CD4-positive, alpha-beta memory T cell (primary cell): ENCODE measurements at regions of chr15 and their contacts with region 1.

Region 1: GRCh38 chr15:66497502-66498455 is at the start of gene SNAPC5:
- DNase-seq: peak; percentile 96 to 97 (median 96)
- H3K4me3 ChIP-seq: peak within 1 kb of the TSS; percentile 86 to 90
- H3K4me3 Mint-ChIP-seq: peak within 1 kb of the TSS; percentile 95 to 98 (median 97)
- H3K27ac ChIP-seq: peak within 1 kb of the TSS; percentile 89
- H3K27ac Mint-ChIP-seq: peak within 1 kb of the TSS; percentile 96 to 99 (median 99)
- H3K4me1 ChIP-seq: peaks cover 50% of the 10 kb centered on the region
- H3K4me1 Mint-ChIP-seq: peaks cover 30 to 75% (median 50%) of the 10 kb centered on the region in 4 donors
- H3K27me3 ChIP-seq: no peaks in the 10 kb centered on the region
- H3K27me3 Mint-ChIP-seq: no peaks in the 10 kb centered on the region
- total RNA-seq, gene SNAPC5: 32.5 to 36.6 TPM

Region 2: DNA sequence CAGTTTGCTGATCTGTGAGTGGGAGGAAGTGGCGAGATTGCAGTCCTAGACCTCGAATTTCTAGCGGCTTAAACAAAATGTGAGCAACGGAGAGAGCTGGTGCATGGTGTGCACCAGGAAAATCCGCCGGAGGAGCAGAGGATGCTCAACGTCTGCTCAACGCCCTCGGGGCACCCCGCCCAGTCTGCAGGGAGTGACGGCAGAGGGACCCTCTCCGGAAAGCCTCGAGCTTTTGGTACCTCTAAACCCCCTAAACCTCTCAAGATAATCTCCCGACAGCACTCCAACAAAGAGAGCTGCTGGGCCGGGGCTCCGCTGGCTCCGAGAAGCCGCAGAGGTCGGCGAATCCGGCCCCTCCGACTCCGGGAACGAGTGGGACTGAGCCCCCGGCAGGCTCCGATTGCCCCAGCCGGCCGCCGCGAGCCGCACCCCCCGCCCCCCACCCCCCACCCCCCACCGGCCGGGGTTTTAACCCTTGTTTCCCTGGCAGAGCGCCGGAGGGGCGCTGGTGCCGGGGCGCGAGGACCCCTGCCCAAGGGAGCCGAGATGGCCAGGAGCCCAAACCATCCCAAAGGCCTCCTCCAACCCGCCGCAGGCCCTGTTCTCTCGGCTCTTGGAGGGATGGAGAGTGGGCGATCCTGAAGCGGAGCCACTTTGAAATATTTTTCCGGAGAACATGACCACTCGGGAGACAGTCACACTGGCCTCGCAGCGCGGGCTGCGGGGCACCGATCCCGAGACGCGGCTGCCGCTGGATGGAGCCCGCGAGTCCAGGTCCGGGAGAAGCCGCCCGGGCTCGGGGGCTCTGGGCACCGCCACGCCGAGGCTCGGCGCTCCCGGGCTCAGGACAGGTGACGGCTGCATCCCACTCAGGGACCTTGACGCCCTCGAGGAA is 245.7 kb before region 1 on chr15:
- CTCF ChIA-PET with region 1: interaction called, 15 read pairs
- POLR2A ChIA-PET with region 1: no interaction called
- intact Hi-C with region 1: loop called (anchors 5 kb)
- DNase-seq: peak in 4 of 5 donors; percentile 21 to 40 (median 29)
- H3K4me3 ChIP-seq: peak overlapping the region; percentile 47 to 52
- H3K4me3 Mint-ChIP-seq: peak overlapping the region; percentile 74 to 86 (median 80)
- H3K27ac ChIP-seq: no peak overlapping the region
- H3K27ac Mint-ChIP-seq: peak overlapping the region in 1 of 7 donors; percentile 11
- H3K4me1 ChIP-seq: peaks cover 23% of the 10 kb centered on the region
- H3K4me1 Mint-ChIP-seq: peaks cover 4 to 34% (median 13%) of the 10 kb centered on the region in 4 donors
- H3K27me3 ChIP-seq: peaks cover 48% of the 10 kb centered on the region
- H3K27me3 Mint-ChIP-seq: peaks cover 43 to 45% of the 10 kb centered on the region in 2 donors

Region 3: GRCh38 chr15:66293419-66294156 is 204.2 kb before region 1 on chr15 and contains the start of gene DIS3L:
- CTCF ChIA-PET with region 1: interaction called, 7 read pairs
- POLR2A ChIA-PET with region 1: interaction called, 30 read pairs
- intact Hi-C with region 1: loop called (anchors 1 kb)
- DNase-seq: peak; percentile 65 to 78 (median 72)
- H3K4me3 ChIP-seq: peak within 1 kb of the TSS; percentile 57 to 91
- H3K4me3 Mint-ChIP-seq: peak within 1 kb of the TSS; percentile 85 to 93 (median 90)
- H3K27ac ChIP-seq: peak within 1 kb of the TSS; percentile 91
- H3K27ac Mint-ChIP-seq: peak within 1 kb of the TSS; percentile 93 to 96 (median 95)
- H3K4me1 ChIP-seq: peaks cover 50% of the 10 kb centered on the region
- H3K4me1 Mint-ChIP-seq: peaks cover 26 to 50% (median 41%) of the 10 kb centered on the region in 4 donors
- H3K27me3 ChIP-seq: no peaks in the 10 kb centered on the region
- H3K27me3 Mint-ChIP-seq: no peaks in the 10 kb centered on the region
- total RNA-seq, gene DIS3L: 36.8 to 40.3 TPM

Region 4: GRCh38 chr15:66356345-66357236 is 141.2 kb before region 1 on chr15 and contains the start of gene TIPIN:
- CTCF ChIA-PET with region 1: interaction called, 33 read pairs
- POLR2A ChIA-PET with region 1: interaction called, 30 read pairs
- intact Hi-C with region 1: loop called (anchors 1 kb)
- DNase-seq: peak; percentile 95 to 97 (median 96)
- H3K4me3 ChIP-seq: peak within 1 kb of the TSS; percentile 79 to 80
- H3K4me3 Mint-ChIP-seq: peak within 1 kb of the TSS; percentile 91 to 99 (median 98)
- H3K27ac ChIP-seq: peak within 1 kb of the TSS; percentile 66
- H3K27ac Mint-ChIP-seq: peak within 1 kb of the TSS; percentile 90 to 98 (median 97)
- H3K4me1 ChIP-seq: peaks cover 15% of the 10 kb centered on the region
- H3K4me1 Mint-ChIP-seq: peaks cover 15 to 23% (median 19%) of the 10 kb centered on the region in 4 donors
- H3K27me3 ChIP-seq: no peaks in the 10 kb centered on the region
- H3K27me3 Mint-ChIP-seq: no peaks in the 10 kb centered on the region
- total RNA-seq, gene TIPIN: 5.9 to 9.0 TPM

Region 5: DNA sequence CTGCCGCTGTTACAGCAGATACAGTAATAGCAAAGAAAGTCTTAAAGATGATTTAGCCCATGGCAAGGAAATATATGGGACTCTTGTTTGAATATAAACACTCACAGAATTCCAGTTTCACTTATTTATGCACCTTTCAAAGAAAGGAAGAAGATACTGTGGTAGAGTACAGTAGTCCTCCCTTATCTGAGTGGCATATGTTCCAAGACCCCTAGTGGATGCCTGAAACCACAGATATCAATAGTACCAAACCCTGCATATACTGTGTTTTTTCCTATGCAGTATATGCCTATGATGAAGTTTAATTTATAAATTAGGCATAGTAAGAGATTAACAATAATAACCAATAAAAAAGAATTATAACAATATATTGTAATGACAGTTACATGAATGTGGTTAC is 102.9 kb before region 1 on chr15:
- CTCF ChIA-PET with region 1: interaction called, 119 read pairs
- POLR2A ChIA-PET with region 1: interaction called, 119 read pairs
- intact Hi-C with region 1: no loop called
- DNase-seq: no peak
- H3K4me3 ChIP-seq: no peak overlapping the region
- H3K4me3 Mint-ChIP-seq: peak overlapping the region in 5 of 8 donors; percentile 16 to 69 (median 55)
- H3K27ac ChIP-seq: no peak overlapping the region
- H3K27ac Mint-ChIP-seq: peak overlapping the region; percentile 52 to 96 (median 70)
- H3K4me1 ChIP-seq: peaks cover 72% of the 10 kb centered on the region
- H3K4me1 Mint-ChIP-seq: peaks cover 52 to 86% (median 66%) of the 10 kb centered on the region in 4 donors
- H3K27me3 ChIP-seq: no peaks in the 10 kb centered on the region
- H3K27me3 Mint-ChIP-seq: no peaks in the 10 kb centered on the region

Region 6: DNA sequence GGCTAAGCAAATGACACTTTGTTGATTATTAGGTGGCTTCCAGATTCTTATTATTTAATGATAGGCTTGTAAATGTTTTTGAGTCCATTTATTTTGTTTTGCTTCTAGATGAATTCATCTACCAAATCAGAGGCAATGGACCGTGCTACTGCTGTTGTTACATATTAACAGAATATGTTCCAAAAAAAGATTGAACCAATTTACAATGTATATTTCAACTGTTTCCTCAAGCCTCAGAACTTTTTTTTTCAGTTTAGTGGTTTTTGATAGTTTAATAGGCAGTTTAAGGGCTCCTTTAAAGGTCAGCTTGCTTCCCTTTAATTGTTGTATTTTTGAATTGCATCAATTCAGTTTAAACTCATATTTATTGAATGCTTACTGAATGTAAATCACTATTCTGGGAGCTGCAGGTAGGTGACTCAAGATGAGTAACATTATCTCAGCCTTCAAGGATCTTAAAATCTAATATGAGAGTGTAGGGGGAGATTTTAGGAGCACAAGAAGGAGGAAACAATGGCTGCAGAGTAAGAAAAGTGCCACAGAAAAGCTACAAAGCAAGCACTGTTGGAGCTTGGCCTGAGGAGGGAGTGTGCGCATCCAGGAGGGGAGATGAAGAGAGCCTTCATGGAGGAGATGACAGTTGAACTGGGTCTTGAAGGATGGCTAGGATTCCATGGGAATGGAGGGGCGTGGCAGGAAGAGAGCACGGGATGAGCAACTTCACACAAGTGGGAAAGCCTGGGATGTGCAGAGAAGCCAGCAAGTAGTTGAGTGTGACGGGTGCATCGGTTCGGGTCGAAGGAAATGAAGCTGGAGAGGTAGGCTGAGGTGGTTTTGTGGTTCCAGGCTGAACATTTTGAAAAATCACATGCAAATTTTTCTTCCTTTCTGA is 96.4 kb before region 1 on chr15:
- CTCF ChIA-PET with region 1: interaction called, 17 read pairs
- POLR2A ChIA-PET with region 1: interaction called, 6 read pairs
- intact Hi-C with region 1: no loop called
- DNase-seq: peak in 1 of 5 donors; percentile 26
- H3K4me3 ChIP-seq: peak overlapping the region in 1 of 2 donors; percentile 33
- H3K4me3 Mint-ChIP-seq: peak overlapping the region; percentile 54 to 89 (median 81)
- H3K27ac ChIP-seq: peak overlapping the region; percentile 14
- H3K27ac Mint-ChIP-seq: peak overlapping the region; percentile 49 to 94 (median 83)
- H3K4me1 ChIP-seq: peaks cover 69% of the 10 kb centered on the region
- H3K4me1 Mint-ChIP-seq: peaks cover 48 to 83% (median 66%) of the 10 kb centered on the region in 4 donors
- H3K27me3 ChIP-seq: no peaks in the 10 kb centered on the region
- H3K27me3 Mint-ChIP-seq: no peaks in the 10 kb centered on the region

Region 7: DNA sequence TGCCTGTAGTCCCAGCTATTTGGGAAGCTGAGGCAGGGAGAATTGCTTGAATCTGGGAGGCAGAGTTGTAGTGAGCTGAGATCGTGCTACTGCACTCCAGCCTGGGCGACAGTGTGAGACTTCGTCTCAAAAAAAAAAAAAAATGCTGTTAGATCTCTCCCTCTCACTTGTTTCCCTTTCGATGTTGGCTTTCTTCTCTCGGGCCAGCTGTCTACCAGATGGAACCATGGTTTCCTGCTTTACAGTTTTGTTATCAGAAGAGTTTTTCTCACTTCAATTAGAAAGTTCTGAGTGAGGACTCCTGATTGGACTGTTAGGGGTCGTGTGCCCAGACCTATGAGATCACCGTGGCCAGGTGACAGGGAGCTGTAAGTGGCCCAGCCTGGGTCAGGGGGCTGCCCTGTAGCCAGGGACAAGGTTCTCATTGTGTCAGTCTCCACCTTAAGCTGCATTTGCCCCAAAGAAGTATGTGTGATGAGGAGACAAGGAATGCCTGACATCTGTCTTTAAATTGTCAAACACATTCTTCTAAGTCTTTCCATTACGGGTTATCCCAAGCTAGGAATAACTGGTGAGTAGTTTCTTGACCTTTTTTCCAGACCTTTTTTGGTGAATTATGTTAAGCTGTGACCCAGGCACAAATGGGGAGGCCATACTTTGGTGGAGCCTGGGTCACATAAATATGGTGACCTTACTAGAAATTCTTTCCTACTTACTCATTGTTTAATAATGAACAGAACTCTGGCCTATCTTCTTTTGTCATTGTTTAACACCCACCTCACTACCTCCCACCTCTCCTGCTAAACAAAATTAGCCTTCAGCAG is 25.4 kb before region 1 on chr15:
- CTCF ChIA-PET with region 1: interaction called, 42 read pairs
- POLR2A ChIA-PET with region 1: interaction called, 9 read pairs
- intact Hi-C with region 1: loop called (anchors 1 kb)
- DNase-seq: peak; percentile 64 to 79 (median 70)
- H3K4me3 ChIP-seq: no peak overlapping the region
- H3K4me3 Mint-ChIP-seq: peak overlapping the region; percentile 44 to 86 (median 76)
- H3K27ac ChIP-seq: peak overlapping the region; percentile 45
- H3K27ac Mint-ChIP-seq: peak overlapping the region; percentile 83 to 97 (median 90)
- H3K4me1 ChIP-seq: peaks cover 32% of the 10 kb centered on the region
- H3K4me1 Mint-ChIP-seq: peaks cover 27 to 55% (median 41%) of the 10 kb centered on the region in 4 donors
- H3K27me3 ChIP-seq: no peaks in the 10 kb centered on the region
- H3K27me3 Mint-ChIP-seq: no peaks in the 10 kb centered on the region